Mammary epithelial cell (primary cell): ENCODE measurements at regions of chr21 and their contacts with region 1.

Region 1: DNA sequence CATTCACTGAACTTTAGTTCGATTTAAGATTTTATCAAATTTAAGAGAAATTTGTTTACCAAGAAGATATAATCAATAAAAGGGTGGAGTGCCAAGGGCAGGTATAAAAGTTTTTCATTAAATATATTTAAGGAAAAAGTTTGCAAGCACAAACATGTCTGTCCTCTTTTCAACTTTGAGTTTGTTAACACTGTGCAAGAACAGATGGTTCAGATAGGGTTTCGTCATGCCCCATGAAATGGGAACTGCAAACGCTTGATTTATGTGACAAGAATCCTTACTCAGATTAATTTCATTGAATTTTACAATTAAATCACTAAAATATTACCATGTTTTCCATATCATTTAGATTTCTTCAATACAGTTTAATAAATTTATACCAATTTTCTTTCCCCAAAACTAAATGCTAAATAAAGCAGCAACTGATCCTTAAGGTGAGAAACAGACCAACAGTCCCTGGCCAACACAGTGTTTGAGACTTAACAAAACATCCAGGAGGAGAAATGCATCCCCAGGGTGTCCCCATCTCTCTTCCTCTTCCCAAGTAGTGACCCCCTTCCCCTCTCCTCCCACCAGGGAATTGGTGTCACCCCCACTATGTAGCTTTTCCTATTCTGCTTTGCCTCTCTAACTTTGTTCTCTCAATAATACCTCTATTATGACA is 292.9 kb downstream of the LTN1 start:
- DNase-seq: peak; percentile 47
- H3K4me3 ChIP-seq: no peak overlapping the region
- H3K27ac ChIP-seq: no peak overlapping the region
- H3K4me1 ChIP-seq: no peaks in the 10 kb centered on the region
- H3K27me3 ChIP-seq: no peaks in the 10 kb centered on the region
- CTCF ChIP-seq: no peak

Region 2: GRCh38 chr21:28675331-28676041 is 24.2 kb before region 1 on chr21:
- CTCF ChIA-PET with region 1: no interaction called
- dilution Hi-C with region 1: no loop called
- in situ Hi-C with region 1: no loop called
- intact Hi-C with region 1: loop called (anchors 1 kb)
- DNase-seq: peak; percentile 50
- H3K4me3 ChIP-seq: no peak overlapping the region
- H3K27ac ChIP-seq: peak overlapping the region; percentile 42
- H3K4me1 ChIP-seq: peaks cover 12% of the 10 kb centered on the region
- H3K27me3 ChIP-seq: no peaks in the 10 kb centered on the region
- CTCF ChIP-seq: no peak